GM10248 (cell line): ENCODE measurements at regions of chr18 and their contacts with region 1.

Region 1: GRCh38 chr18:54269893-54270844 is 852 bp downstream of the POLI start:
- DNase-seq: peak; percentile 41
- CTCF ChIP-seq: peak; percentile 51

Region 2: DNA sequence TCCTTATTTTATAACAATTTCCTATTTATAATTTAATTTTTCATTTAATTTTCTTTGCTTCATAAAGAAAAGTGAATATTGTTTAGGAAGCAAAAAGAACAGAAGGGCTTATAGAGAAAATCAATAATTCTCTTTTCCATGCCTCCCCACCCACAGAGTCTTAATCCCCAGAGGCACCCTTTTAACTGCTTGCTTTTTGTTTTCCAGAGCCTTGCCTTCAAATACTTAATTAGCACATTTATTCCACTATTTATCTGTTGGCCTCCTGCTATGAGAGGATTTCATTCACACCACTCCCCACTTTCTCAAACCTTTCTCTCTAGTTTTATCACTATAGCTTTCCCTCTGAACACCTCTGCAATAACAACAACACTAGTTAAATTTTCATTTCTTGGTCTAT is 419.3 kb before region 1 on chr18:
- CTCF ChIA-PET with region 1: no interaction called
- POLR2A ChIA-PET with region 1: no interaction called
- DNase-seq: no peak
- CTCF ChIP-seq: no peak

Region 3: DNA sequence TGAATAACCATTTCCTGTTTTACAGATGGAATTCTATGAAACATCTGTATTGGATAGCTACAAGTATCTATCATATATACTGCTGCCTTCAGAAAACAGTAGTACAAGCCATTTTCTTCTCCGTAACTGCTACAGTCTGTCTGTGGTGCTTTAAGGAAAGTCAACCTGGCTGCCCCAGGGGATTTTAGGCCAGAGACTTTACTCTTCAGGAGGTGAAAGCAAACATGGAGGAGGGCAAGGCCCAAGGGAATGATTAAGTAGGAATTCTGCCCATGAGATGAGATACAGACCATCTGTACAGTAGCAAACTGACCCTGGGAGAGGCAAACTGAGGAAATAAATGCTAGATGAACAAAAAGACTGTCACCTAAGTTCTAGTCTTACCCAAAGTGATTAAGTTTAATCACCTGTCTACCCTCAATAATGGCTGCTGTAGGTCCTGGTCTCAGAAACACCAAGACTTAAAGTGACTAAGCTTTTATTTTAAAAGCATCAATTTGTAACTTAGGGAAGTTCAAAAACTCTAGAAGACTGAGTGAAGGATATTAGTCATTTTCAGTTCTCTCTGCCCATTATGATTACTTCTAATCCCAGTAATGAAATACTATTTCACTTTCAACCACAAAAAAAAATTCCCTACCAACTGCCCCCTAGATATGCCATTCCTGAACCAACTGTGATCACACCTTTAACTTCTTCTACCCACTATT is 60.5 kb before region 1 on chr18:
- CTCF ChIA-PET with region 1: interaction called, 13 read pairs
- POLR2A ChIA-PET with region 1: interaction called, 5 read pairs
- DNase-seq: peak; percentile 37
- CTCF ChIP-seq: no peak

Region 4: GRCh38 chr18:54284981-54285785 is 15.0 kb after region 1 on chr18:
- CTCF ChIA-PET with region 1: interaction called, 27 read pairs
- POLR2A ChIA-PET with region 1: no interaction called
- DNase-seq: peak; percentile 75
- CTCF ChIP-seq: no peak

Region 5: DNA sequence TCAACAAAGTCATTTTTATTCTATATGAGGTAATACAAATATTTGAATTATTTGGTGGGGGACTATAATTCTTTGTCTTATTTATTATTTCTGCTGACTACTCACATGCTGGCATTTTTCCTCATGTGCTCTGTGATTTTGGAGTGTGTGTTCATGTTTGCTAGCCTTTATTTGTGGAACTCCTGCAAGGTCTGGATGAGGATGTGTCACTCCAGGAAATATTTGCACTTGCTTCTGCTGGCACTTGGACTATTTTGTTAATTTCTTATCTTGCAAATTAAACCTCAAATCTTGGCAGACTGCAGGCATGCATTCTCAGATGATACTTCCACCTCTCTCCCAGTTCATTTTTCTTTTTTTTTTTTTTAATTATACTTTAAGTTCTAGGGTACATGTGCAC is 33.2 kb after region 1 on chr18:
- CTCF ChIA-PET with region 1: no interaction called
- POLR2A ChIA-PET with region 1: no interaction called
- DNase-seq: no peak
- CTCF ChIP-seq: no peak

Region 6: DNA sequence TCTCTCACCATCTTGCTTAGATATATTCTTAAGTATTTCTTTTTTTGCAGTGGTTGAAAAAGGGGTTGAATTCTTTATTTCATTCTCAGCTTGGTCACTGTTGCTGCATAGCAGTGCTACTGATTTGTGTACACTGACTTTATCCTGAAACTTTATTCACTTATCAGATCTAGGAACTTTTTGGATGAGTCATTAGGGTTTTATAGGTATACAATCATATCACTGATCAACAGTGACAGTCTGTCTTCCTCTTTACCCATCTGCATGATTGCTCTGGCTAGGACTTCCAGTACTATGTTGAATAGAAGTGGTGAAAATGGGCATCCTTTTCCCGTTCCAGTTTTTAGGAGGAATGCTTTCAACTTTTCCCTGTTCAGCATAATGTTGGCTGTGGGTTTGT is 81.0 kb after region 1 on chr18:
- CTCF ChIA-PET with region 1: no interaction called
- POLR2A ChIA-PET with region 1: no interaction called
- DNase-seq: no peak
- CTCF ChIP-seq: no peak

Region 7: GRCh38 chr18:54671291-54671881 is 401.2 kb after region 1 on chr18:
- CTCF ChIA-PET with region 1: no interaction called
- POLR2A ChIA-PET with region 1: no interaction called
- DNase-seq: peak; percentile 26
- CTCF ChIP-seq: peak; percentile 53